ENCODE measurements at regions of chr21 and their contacts with region 1.

Region 1: DNA sequence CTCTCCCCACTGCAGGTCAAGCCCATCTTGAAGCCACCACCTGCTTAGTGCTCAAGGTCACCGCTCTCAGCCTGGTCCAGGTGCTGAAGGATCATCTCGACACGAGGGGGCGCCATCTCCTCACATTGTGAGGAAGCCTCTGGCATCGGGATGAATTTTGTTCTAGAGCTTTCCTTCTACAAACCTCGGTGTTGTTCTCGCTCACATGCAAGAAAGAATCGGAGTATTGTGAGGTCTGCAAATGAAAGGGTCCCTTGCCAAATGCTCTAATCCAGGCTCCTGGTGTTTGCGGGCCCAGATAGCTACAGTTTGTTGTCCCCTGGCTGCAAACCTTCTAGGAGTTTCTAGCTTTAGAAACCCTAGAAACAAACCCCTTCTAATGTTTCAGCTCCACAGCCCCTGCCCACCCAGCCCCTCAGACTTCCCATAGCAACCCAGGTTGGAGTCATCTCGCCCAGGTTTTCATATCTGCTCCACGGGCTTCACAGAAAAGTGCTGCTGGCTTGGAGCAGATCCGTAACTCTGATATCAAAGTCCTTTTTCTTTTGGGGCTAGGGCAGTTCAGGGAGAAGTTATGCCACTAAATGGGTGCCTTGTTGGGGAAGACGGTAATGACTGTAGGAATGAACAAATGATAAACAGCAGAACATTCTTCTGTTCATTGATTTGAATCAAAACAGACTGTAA is 8.6 kb upstream of the ATP5PO start:
- DNase-seq: peak; percentile 96
- H3K4me3 ChIP-seq: no peak overlapping the region
- H3K27ac ChIP-seq: peak overlapping the region in 1 of 8 donors; percentile 33
- H3K4me1 ChIP-seq: peaks cover 0 to 13% (median 4%) of the 10 kb centered on the region in 6 donors
- H3K27me3 ChIP-seq: no peaks in the 10 kb centered on the region
- CTCF ChIP-seq: peak; percentile 83 to 96 (median 91)
- POLR2A ChIP-seq: no peak

Region 2: DNA sequence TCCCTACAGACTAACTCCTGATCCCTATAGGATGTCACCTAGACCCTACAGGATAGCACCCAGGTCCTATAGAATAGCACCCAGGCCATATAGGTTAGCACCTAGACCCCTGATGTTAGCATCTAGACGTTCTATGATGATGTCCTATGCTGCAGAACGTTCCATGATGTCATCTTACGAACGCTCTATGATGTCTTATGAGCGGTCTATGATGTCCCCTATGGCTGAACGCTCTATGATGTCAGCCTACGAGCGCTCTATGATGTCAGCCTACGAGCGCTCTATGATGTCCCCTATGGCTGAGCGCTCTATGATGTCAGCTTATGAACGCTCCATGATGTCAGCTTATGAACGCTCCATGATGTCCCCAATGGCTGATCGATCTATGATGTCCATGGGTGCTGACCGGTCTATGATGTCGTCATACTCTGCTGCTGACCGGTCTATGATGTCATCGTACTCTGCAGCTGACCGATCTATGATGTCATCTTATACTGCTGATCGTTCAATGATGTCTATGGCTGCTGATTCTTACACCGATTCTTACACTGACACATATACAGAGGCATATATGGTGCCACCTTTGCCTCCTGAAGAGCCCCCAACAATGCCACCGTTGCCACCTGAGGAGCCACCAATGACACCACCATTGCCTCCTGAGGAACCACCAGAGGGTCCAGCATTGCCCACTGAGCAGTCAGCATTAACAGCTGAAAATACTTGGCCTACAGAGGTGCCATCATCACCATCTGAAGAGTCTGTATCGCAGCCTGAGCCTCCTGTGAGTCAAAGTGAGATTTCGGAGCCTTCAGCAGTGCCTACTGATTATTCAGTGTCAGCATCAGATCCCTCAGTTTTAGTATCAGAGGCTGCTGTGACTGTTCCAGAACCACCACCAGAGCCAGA is 371.9 kb before region 1 on chr21:
- intact Hi-C with region 1: no loop called
- DNase-seq: no peak
- H3K4me3 ChIP-seq: no peak overlapping the region
- H3K27ac ChIP-seq: no peak overlapping the region
- H3K4me1 ChIP-seq: peaks cover 5 to 78% (median 42%) of the 10 kb centered on the region in 6 donors
- H3K27me3 ChIP-seq: no peaks in the 10 kb centered on the region
- CTCF ChIP-seq: no peak
- POLR2A ChIP-seq: no peak

Region 3: GRCh38 chr21:34345091-34345871 is 421.1 kb after region 1 on chr21:
- intact Hi-C with region 1: loop called (anchors 5 kb)
- DNase-seq: no peak
- H3K4me3 ChIP-seq: no peak overlapping the region
- H3K27ac ChIP-seq: no peak overlapping the region
- H3K4me1 ChIP-seq: no peaks in the 10 kb centered on the region
- H3K27me3 ChIP-seq: no peaks in the 10 kb centered on the region
- CTCF ChIP-seq: no peak
- POLR2A ChIP-seq: no peak